ENCODE measurements at regions of chr17 and their contacts with region 1.

Region 1: GRCh38 chr17:76671123-76671911 is 27.8 kb upstream of the ST6GALNAC1 start:
- DNase-seq: peak; percentile 100
- ATAC-seq: peak; percentile 93
- H3K4me3 ChIP-seq: peak overlapping the region; percentile 66 to 83 (median 80)
- H3K27ac ChIP-seq: peak overlapping the region; percentile 83
- H3K4me1 ChIP-seq: peaks cover 54% of the 10 kb centered on the region
- H3K27me3 ChIP-seq: no peaks in the 10 kb centered on the region; a peak in 1 of 5 replicates
- CTCF ChIP-seq: peak; percentile 46; the same call in 1 of the 2 replicates
- EP300 ChIP-seq: no peak; a peak in 1 of 4 replicates
- POLR2A ChIP-seq: peak; percentile 80 to 83
- RAD21 ChIP-seq: peak; percentile 34; the same call in 1 of the 2 replicates

Region 2: DNA sequence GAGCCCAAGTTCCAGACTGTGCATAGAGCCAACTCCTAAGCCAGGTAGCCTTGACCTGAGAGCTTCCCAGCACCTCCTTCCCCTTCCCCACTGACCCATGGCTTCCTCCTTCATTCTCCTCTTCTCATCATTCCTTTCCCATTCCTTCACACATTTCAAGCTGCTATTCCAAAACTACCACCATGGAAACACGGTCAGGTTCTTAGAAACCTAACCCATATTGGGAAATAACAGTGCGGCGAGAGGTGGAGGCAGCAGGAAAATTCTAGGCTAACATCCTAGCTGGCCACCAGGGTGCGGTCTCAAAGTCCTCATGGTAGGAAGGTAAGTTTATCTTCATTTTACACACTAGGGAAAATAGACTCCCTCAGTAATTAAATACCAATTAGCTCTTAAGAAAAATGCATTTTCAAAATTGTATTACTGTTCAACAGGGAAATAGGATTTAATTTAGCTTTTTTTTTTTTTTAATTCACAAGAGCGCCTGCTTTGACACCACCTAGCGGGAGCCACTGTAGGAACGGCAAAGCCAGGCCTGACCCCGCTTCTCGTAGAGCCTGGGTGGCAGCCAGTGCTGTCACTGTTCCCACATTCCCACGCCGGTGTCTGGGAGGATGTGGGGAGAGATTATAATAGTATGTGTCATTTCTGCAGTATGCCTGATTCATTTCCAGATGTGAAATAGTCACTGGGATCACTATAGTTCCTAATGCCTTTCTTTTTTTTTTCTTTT is 300.9 kb before region 1 on chr17:
- CTCF ChIA-PET with region 1: no interaction called
- POLR2A ChIA-PET with region 1: no interaction called
- in situ Hi-C with region 1: no loop called
- intact Hi-C with region 1: no loop called
- DNase-seq: no peak
- ATAC-seq: peak; percentile 33; the same call in 2 of the 3 replicates
- H3K4me3 ChIP-seq: no peak overlapping the region
- H3K27ac ChIP-seq: no peak overlapping the region
- H3K4me1 ChIP-seq: peaks cover 90% of the 10 kb centered on the region
- H3K27me3 ChIP-seq: no peaks in the 10 kb centered on the region
- CTCF ChIP-seq: peak; percentile 58
- EP300 ChIP-seq: no peak
- POLR2A ChIP-seq: no peak
- RAD21 ChIP-seq: peak; percentile 52; the same call in 1 of the 2 replicates

Region 3: DNA sequence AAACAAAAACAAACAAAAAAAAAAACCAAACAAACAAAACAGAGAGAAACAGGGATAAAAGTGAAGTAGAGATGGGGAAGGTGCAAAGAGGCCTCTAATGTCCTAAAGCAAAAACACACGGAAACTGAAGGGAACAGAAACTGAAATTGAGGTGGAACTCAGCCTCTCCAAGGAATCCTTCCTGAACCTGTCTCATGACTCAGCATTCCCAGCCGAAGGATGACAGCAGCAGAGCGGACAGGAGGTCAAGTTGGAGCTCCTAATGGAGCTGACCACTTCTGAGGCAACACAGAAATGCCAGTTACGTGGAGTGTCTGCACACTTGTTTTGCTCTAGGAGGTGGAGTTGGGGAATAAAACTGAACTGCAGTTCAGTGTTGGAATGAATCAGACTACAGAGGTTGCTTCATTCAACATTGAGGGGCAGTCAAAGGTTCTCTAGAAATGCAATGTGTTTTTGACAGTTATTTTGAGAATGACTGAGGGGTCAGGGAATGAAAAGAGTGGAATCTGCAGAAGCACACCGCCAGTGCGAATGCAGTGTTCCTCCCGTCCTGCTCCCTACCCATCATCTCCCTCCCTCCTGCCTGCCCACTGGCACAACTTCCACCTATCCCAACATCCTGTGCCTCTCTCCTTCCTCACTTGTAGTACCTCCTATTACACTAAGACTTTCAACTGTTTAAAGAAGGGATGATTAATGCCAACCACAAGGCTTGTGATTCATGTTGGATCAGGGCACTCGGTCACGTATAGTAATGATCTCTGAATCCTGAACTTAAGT is 224.7 kb before region 1 on chr17:
- CTCF ChIA-PET with region 1: no interaction called
- POLR2A ChIA-PET with region 1: no interaction called
- in situ Hi-C with region 1: no loop called
- intact Hi-C with region 1: no loop called
- DNase-seq: peak; percentile 84
- ATAC-seq: peak; percentile 77
- H3K4me3 ChIP-seq: peak overlapping the region in 1 of 3 experiments; percentile 29; a peak in 2 of 6 replicates
- H3K27ac ChIP-seq: peak overlapping the region; percentile 41
- H3K4me1 ChIP-seq: peaks cover 92% of the 10 kb centered on the region
- H3K27me3 ChIP-seq: no peaks in the 10 kb centered on the region
- CTCF ChIP-seq: no peak
- EP300 ChIP-seq: no peak; a peak in 1 of 4 replicates
- POLR2A ChIP-seq: no peak
- RAD21 ChIP-seq: no peak

Region 4: DNA sequence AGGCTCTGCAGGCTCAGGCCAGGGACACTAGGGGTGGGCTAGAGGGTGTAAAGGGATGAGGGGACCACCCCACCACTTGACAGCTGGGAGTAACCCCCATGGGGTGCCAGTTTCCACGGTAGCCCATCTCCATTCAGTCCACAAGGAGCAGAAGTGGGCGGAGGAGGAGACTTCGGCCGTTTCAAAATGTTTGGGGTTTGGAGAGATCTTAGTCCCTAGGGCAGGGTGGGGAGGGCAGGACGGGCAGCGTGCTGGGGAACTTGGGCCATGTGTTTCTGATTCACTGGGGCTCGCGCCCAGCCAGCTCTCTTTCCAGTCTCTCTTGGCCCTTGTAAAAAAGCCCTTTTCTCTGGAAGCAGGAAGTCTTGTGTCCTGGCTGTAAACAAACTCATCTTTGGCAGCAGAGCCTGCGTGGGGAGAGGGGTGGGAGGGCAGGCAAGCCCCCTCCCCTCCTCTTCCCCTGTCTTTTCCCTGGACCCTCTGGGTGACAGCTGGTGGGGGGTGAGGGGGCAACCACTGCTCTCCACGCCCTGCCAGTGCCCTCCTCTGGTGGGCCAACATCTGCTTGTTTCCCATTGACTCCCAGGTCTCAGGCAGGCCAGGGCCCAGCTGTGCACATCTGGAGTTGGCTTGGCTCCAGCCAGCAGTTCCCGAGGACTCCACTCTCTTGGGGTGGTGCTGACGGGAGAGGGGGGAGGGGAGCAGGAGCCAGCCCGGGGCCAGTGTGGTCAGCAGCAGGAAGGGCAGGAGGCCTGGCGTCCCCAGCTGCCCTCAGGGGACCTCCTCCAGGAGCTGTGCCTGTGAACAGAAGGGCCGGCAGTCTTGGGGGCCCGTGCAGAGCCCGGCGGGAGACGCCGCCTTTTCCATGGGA is 141.9 kb before region 1 on chr17:
- CTCF ChIA-PET with region 1: no interaction called
- POLR2A ChIA-PET with region 1: interaction called, 12 read pairs
- in situ Hi-C with region 1: no loop called
- intact Hi-C with region 1: loop called (anchors 5 kb)
- DNase-seq: peak; percentile 61
- ATAC-seq: peak; percentile 13
- H3K4me3 ChIP-seq: peak overlapping the region in 1 of 3 experiments; percentile 35; a peak in 1 of 6 replicates
- H3K27ac ChIP-seq: peak overlapping the region; percentile 60
- H3K4me1 ChIP-seq: peaks cover 91% of the 10 kb centered on the region
- H3K27me3 ChIP-seq: no peaks in the 10 kb centered on the region
- CTCF ChIP-seq: peak; percentile 22; the same call in 1 of the 2 replicates
- EP300 ChIP-seq: peak; percentile 19; a peak in 1 of 4 replicates
- POLR2A ChIP-seq: no peak
- RAD21 ChIP-seq: no peak

Region 5: GRCh38 chr17:76585818-76586593 is 85.3 kb before region 1 on chr17 and contains the start of gene ST6GALNAC2:
- CTCF ChIA-PET with region 1: no interaction called
- POLR2A ChIA-PET with region 1: interaction called, 12 read pairs
- in situ Hi-C with region 1: no loop called
- intact Hi-C with region 1: no loop called
- DNase-seq: peak; percentile 66
- ATAC-seq: peak; percentile 93
- H3K4me3 ChIP-seq: peak within 1 kb of the TSS; percentile 55 to 72 (median 58)
- H3K27ac ChIP-seq: no peak within 1 kb of the TSS
- H3K4me1 ChIP-seq: peaks cover 53% of the 10 kb centered on the region
- H3K27me3 ChIP-seq: peaks cover 11 to 40% of the 10 kb centered on the region in 2 experiments; a peak in 4 of 5 replicates
- CTCF ChIP-seq: peak; percentile 90
- EP300 ChIP-seq: no peak
- POLR2A ChIP-seq: no peak
- RAD21 ChIP-seq: peak; percentile 98
- total RNA-seq, gene ST6GALNAC2: 0.49 and 0.84 TPM in 2 replicates

Region 6: DNA sequence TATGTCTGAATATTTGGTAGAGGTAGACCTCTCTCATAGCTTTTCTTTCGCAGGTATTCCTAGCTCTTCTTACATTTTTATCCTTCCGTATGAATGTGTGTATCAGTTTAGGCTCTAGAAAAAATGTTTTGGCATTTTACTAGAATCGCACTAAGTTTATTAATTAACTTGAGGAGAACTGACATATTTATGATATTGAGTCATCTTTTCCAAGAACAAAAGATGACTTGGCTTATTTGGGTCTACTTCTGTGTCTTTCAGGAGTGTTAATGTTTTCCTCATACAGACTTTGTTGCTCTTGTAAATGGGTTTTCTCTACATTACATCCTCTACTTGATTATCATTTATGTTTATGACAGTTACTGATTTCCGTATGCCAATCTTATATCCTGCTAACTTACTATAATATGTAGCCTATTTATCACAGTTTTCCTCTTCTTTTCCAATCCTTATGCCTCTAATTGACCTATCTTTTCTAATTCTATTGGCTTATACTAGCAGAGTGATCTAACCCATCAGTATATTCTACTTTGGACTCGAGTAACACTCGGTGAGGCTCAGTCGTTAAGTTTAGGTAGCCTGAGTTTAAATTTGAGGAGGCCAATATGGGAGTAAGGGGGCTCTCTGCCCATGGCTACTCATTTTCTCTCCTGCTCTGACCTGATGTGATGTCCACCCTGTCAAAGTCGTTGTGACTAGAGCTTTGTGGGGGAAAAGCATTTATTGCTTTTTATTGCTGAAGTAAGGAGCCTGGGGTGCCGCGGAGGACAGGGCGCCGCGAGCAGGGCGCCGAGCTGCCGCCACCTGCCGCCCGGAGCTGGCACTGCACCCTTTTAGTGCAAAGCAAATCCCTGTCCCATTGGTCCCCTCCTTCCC is 47.8 kb before region 1 on chr17:
- CTCF ChIA-PET with region 1: no interaction called
- POLR2A ChIA-PET with region 1: interaction called, 17 read pairs
- in situ Hi-C with region 1: no loop called
- intact Hi-C with region 1: no loop called
- DNase-seq: peak; percentile 41
- ATAC-seq: peak; percentile 84
- H3K4me3 ChIP-seq: peak overlapping the region in 2 of 3 experiments; percentile 44; a peak in 4 of 6 replicates
- H3K27ac ChIP-seq: no peak overlapping the region
- H3K4me1 ChIP-seq: peaks cover 13% of the 10 kb centered on the region
- H3K27me3 ChIP-seq: peaks cover 0 to 2% of the 10 kb centered on the region in 2 experiments; a peak in 1 of 5 replicates
- CTCF ChIP-seq: peak; percentile 93
- EP300 ChIP-seq: no peak
- POLR2A ChIP-seq: no peak
- RAD21 ChIP-seq: peak; percentile 95

Region 7: GRCh38 chr17:76687308-76688164 is 16.2 kb after region 1 on chr17:
- CTCF ChIA-PET with region 1: no interaction called
- POLR2A ChIA-PET with region 1: interaction called, 23 read pairs
- in situ Hi-C with region 1: no loop called
- intact Hi-C with region 1: no loop called
- DNase-seq: no peak
- ATAC-seq: no peak
- H3K4me3 ChIP-seq: no peak overlapping the region
- H3K27ac ChIP-seq: no peak overlapping the region
- H3K4me1 ChIP-seq: peaks cover 62% of the 10 kb centered on the region
- H3K27me3 ChIP-seq: no peaks in the 10 kb centered on the region
- CTCF ChIP-seq: no peak
- EP300 ChIP-seq: no peak
- POLR2A ChIP-seq: no peak
- RAD21 ChIP-seq: no peak

Region 8: DNA sequence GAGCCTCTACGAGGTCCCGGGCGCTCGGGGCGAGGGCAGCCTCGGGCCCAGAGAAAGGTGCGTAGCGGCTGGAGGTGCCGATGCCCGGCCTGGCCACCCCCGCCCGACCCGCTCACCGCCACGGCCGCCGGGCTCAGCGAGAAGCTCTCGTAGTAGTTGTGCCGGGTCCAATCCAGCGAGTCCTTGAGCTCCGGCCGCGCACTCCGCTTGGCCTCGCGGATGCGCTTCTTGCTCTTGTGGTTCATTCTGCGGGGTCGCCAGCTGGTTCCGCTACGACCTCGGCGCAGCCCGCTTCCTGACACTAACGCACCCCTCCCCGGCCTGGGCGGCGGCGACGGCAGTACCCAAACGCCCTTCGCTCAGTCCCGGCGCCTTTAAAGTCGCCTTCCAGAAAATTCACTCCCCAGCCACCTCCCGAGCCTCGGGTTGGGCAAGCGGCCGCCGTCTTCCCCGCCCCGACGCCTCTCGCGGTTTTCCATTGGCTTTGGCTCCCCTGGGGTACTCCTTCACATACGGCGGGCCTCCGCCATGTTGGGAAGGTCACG is 55.0 kb after region 1 on chr17 and contains the start of gene JMJD6:
- CTCF ChIA-PET with region 1: no interaction called
- POLR2A ChIA-PET with region 1: interaction called, 19 read pairs
- in situ Hi-C with region 1: no loop called
- intact Hi-C with region 1: no loop called
- DNase-seq: peak; percentile 93
- ATAC-seq: peak; percentile 82
- H3K4me3 ChIP-seq: peak within 1 kb of the TSS; percentile 78 to 98 (median 95)
- H3K27ac ChIP-seq: peak within 1 kb of the TSS; percentile 98
- H3K4me1 ChIP-seq: peaks cover 69% of the 10 kb centered on the region
- H3K27me3 ChIP-seq: no peaks in the 10 kb centered on the region
- CTCF ChIP-seq: no peak
- EP300 ChIP-seq: peak in 1 of 2 experiments; percentile 20; a peak in 1 of 4 replicates
- POLR2A ChIP-seq: peak in 1 of 2 experiments; percentile 75; a peak in 3 of 4 replicates
- RAD21 ChIP-seq: peak; percentile 12; the same call in 1 of the 2 replicates
- total RNA-seq, gene JMJD6: 41.0 and 49.1 TPM in 2 replicates

Region 9: GRCh38 chr17:76868176-76868668 is 196.9 kb after region 1 on chr17 and contains the start of gene MGAT5B:
- CTCF ChIA-PET with region 1: no interaction called
- POLR2A ChIA-PET with region 1: no interaction called
- in situ Hi-C with region 1: no loop called
- intact Hi-C with region 1: no loop called
- DNase-seq: peak; percentile 53
- ATAC-seq: peak; percentile 92
- H3K4me3 ChIP-seq: peak within 1 kb of the TSS in 1 of 3 experiments; percentile 54; a peak in 1 of 6 replicates
- H3K27ac ChIP-seq: no peak within 1 kb of the TSS
- H3K4me1 ChIP-seq: peaks cover 6% of the 10 kb centered on the region; the same call in 1 of the 2 replicates
- H3K27me3 ChIP-seq: peaks cover 30 to 75% of the 10 kb centered on the region in 2 experiments
- CTCF ChIP-seq: peak; percentile 77
- EP300 ChIP-seq: no peak
- POLR2A ChIP-seq: no peak
- RAD21 ChIP-seq: peak; percentile 100
- total RNA-seq, gene MGAT5B: 0.07 and 0.13 TPM in 2 replicates

Region 10: DNA sequence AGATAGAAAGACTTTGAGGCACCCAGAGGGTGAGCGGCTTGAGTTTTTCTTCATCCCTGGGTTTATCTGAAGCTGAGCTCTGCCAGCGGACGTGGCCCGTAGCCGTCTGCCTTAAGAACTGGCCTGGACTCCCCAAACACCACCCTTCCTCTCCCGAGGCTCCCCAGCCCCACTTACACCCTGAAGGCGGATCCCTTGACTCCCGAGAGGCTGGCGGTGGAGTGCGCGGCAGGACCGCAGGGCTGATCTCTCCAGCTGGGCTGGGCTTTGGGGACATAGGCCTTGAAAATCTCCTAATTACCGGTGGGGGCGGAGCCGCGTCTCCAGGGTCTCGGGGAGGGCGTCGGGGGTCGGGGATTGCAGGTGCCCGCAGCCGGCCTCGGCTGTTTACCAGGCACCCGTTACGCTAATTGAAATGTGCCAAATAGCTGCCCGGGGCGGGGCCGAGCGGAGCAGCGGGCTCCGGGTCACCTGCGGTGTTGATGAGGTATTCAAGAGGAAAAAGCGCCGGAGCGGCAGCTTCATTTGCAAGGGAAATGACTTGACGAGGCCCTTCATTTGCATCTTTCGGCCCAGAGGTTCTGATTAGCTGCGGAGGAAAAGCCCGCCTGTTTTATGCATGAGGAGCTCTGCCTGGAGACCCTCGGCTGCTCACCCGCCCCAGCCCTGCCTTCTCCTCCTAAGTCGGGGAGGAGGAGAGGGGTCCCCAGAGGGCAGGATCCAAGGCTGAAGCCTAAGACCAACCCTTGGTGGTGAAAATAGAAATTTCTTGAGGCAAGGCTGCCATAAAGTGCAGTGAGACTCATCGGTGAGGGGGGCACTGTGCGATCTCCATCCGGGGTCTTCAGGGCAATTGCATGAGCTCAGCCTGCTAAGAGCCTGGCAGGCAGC is 297.6 kb after region 1 on chr17:
- CTCF ChIA-PET with region 1: no interaction called
- POLR2A ChIA-PET with region 1: no interaction called
- in situ Hi-C with region 1: no loop called
- intact Hi-C with region 1: no loop called
- DNase-seq: no peak
- ATAC-seq: no peak
- H3K4me3 ChIP-seq: no peak overlapping the region
- H3K27ac ChIP-seq: no peak overlapping the region
- H3K4me1 ChIP-seq: no peaks in the 10 kb centered on the region
- H3K27me3 ChIP-seq: peaks cover 10 to 69% of the 10 kb centered on the region in 2 experiments; a peak in 4 of 5 replicates
- CTCF ChIP-seq: no peak
- EP300 ChIP-seq: no peak
- POLR2A ChIP-seq: no peak
- RAD21 ChIP-seq: no peak

Measured in HepG2 (cell line).